A549 (cell line): ENCODE measurements at regions of chr5 and their contacts with region 1.

Region 1: DNA sequence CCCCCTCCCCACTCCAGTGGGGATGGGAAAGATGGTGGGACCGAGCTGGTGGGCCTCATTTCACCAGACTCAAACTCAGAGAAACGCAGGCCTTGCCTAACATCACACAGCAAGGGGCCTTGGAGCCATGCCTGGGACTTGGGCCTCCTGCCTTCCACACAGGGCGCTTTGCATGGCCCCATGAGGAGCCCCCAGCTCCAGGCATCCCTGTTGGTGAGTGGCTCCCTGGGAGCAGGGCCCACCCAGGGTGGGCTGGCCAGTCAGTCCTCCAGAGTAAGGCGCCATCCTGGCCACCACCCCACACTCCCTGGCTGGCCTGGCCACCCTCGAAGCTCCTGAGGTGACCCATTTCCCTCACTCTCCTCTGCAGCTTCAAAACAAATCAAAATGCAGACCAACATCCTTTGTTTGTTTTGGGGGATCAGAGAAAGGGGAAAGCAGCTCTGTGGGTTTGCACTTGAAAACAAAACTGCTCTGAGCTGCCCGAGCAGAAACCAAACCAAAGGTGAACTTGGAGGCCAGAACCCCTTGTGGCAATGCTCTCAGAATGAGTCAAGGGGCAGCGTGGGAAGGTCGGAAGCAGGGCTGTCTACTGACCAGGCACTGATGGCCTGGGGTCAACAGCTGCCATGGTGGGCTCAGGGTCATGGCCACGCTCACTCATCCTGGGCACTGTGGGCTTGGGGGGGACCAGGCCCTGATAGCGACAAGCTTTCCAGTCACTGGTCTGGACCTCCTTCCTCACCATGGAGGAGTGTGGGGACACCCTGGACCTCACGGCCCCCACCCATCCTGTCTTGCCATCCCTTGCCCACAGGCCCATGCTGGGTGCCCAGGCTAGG is 37.0 kb upstream of the VDAC1 start:
- DNase-seq: no peak
- ATAC-seq: no peak
- H3K4me3 ChIP-seq: no peak overlapping the region
- H3K27ac ChIP-seq: no peak overlapping the region
- H3K4me1 ChIP-seq: no peaks in the 10 kb centered on the region
- CTCF ChIP-seq: no peak
- EP300 ChIP-seq: no peak
- POLR2A ChIP-seq: no peak
- RAD21 ChIP-seq: no peak

Region 2: GRCh38 chr5:133945568-133945967 is 96.2 kb before region 1 on chr5:
- CTCF ChIA-PET with region 1: no interaction called
- POLR2A ChIA-PET with region 1: no interaction called
- DNase-seq: no peak
- ATAC-seq: no peak
- H3K4me3 ChIP-seq: no peak overlapping the region
- H3K27ac ChIP-seq: no peak overlapping the region
- H3K4me1 ChIP-seq: no peaks in the 10 kb centered on the region
- CTCF ChIP-seq: no peak
- EP300 ChIP-seq: no peak
- POLR2A ChIP-seq: no peak
- RAD21 ChIP-seq: no peak

Region 3: GRCh38 chr5:133977161-133977787 is 64.5 kb before region 1 on chr5:
- CTCF ChIA-PET with region 1: interaction called, 10 read pairs
- POLR2A ChIA-PET with region 1: no interaction called
- DNase-seq: no peak
- ATAC-seq: peak in 1 of 2 experiments; percentile 7; a peak in 2 of 6 replicates
- H3K4me3 ChIP-seq: no peak overlapping the region
- H3K27ac ChIP-seq: peak overlapping the region; percentile 70 to 82; a peak in 5 of 6 replicates
- H3K4me1 ChIP-seq: peaks cover 27% of the 10 kb centered on the region
- CTCF ChIP-seq: no peak
- EP300 ChIP-seq: no peak
- POLR2A ChIP-seq: no peak
- RAD21 ChIP-seq: no peak

Region 4: GRCh38 chr5:134018154-134018985 is 23.4 kb before region 1 on chr5:
- CTCF ChIA-PET with region 1: interaction called, 161 read pairs
- POLR2A ChIA-PET with region 1: no interaction called
- DNase-seq: peak; percentile 80 to 92
- ATAC-seq: peak; percentile 88 to 93
- H3K4me3 ChIP-seq: no peak overlapping the region
- H3K27ac ChIP-seq: peak overlapping the region; percentile 88 to 93
- H3K4me1 ChIP-seq: peaks cover 50% of the 10 kb centered on the region
- CTCF ChIP-seq: no peak
- EP300 ChIP-seq: peak; percentile 40 to 71; a peak in 2 of 5 replicates
- POLR2A ChIP-seq: no peak
- RAD21 ChIP-seq: peak in 1 of 2 experiments; percentile 18; a peak in 1 of 5 replicates

Region 5: DNA sequence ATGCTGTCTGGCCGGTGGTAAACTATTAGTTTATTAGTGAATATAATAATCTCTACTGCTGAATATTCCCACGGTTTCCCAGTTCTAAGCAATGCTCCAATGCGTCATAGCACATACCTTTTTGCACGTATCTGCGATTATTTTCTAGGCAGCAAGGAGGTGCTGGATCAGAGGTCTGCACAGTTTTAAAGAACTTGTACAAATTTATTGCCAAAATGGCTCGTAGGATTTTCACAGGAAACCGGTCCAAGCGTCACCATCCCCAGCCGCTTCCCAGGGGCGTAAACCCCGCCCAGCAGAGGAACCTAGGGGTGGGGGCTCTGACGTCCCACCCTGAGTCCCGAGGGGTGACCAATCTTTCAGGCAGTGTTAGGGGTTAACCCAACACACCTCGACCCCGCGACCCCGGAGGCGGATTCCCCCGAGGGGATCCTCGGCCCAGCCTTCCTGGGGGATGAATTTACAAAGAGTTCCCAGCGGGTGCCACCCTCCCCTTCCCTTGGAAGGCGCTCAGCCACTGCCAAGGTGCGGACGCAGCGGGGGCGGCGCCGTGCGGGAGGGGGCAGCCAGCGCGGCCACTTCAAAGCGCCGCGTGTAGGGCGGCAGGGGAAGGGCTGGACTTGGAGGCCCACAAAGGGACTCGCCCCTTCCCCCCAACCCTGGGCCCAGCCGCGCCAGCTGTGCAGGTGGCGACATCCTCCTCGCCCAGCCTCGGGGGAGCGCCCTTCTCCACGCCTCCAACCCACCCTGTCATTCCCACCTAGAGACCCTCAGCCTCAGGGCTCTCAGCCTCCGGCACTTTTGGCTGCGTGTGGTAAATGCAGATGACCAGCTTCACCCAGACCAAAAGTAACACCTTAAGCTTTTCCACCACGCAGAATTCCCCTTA is 29.2 kb after region 1 on chr5:
- CTCF ChIA-PET with region 1: interaction called, 106 read pairs
- POLR2A ChIA-PET with region 1: no interaction called
- DNase-seq: peak; percentile 59 to 66
- ATAC-seq: peak; percentile 62 to 80
- H3K4me3 ChIP-seq: peak overlapping the region; percentile 54
- H3K27ac ChIP-seq: peak overlapping the region; percentile 64 to 90
- H3K4me1 ChIP-seq: peaks cover 8% of the 10 kb centered on the region; the same call in 2 of the 3 replicates
- CTCF ChIP-seq: peak; percentile 11; the same call in 1 of the 3 replicates
- EP300 ChIP-seq: no peak
- POLR2A ChIP-seq: no peak
- RAD21 ChIP-seq: no peak

Region 6: DNA sequence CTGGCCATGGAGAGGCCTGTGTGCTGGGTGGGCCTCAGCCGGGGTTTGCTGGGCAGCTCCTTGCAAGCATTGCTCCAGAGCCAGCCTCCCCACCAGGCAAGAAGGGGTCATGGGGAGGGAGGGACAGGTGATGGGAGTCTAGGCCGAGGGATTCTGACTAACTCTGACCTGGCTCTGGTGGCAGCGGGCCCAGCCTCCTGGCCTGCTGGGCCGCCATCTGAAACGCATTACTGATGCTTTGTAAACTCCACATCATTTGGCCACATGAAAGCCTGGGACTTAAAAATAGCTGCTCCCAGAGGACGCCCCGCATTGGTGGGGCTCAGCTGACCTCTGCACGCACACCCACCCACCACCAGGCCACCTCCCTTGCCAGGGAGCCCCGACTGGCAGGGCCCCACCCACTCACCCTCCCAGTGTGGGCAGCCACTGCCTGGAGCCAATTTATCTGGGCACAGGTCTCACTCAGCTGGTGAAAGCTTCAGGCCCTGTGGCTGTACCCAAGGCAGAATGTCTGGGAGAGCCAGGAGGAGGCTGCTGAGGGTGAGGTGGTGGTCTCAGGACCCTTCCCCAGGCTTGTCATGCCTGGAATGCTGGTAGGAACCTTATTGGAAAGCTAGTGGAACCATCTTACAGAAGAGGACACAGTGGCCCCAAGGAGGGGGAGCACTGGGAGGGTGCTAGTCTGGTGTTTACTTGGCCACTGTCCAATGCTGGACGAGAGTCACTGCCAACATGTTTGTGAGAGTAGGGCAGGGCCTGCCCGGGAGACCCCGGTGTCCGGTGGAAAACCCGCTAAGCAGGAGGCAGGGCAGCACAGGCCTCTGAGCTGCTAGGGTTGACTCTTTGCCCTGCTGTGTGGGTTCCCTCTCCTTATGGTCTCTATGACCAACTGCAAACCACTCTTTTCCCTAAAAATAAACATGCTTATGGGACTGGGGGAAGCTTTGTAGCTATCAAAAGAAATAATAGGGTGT is 83.5 kb after region 1 on chr5:
- CTCF ChIA-PET with region 1: interaction called, 99 read pairs
- POLR2A ChIA-PET with region 1: no interaction called
- DNase-seq: no peak
- ATAC-seq: peak; percentile 20 to 40; a peak in 4 of 6 replicates
- H3K4me3 ChIP-seq: no peak overlapping the region
- H3K27ac ChIP-seq: peak overlapping the region in 1 of 2 experiments; percentile 72; a peak in 4 of 6 replicates
- H3K4me1 ChIP-seq: peaks cover 18% of the 10 kb centered on the region
- CTCF ChIP-seq: no peak
- EP300 ChIP-seq: no peak
- POLR2A ChIP-seq: no peak
- RAD21 ChIP-seq: no peak

Region 7: DNA sequence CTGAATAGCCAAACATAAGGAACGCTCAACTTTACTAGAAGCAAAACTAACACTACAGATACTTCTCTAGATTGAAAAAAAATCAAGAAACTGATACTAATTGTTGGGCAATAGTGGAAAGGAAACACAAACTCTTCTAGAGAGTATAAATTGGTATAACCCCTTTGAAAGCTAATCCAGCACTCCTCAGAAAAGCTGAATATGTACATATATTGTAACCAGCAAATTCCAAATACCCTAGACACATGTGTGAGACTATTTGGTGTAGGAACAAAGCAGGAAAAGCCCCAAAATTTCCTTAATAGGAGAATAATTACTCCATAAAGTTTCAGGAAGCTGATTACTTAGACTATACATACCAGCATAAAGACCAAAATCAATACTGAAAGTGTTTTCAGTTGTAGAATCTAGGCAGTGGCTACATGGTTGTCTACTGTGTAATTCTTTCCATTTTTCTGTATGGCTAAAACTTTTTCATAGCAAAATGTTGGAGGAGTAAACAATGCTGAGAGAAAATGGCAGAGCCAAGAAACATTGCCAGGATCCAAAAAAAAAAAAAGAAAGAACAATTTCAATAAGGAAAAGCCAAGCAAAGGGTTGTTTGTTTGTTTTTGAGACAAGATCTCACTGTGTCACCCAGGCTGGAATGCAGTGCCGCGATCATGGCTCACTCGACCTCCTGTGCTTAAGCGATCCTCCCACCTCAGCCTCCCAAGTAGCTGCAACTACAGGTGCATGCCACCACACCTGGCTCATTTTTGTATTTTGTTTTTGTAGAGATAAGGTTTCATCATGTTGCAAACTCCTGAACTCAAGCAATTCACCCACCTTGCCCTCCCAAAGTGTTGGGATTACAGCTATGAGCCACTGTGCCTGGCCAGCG is 120.0 kb after region 1 on chr5:
- CTCF ChIA-PET with region 1: interaction called, 55 read pairs
- POLR2A ChIA-PET with region 1: no interaction called
- DNase-seq: no peak
- ATAC-seq: no peak
- H3K4me3 ChIP-seq: no peak overlapping the region
- H3K27ac ChIP-seq: no peak overlapping the region
- H3K4me1 ChIP-seq: no peaks in the 10 kb centered on the region
- CTCF ChIP-seq: no peak
- EP300 ChIP-seq: no peak
- POLR2A ChIP-seq: no peak
- RAD21 ChIP-seq: no peak